AG04449 (cell line): ENCODE measurements at regions of chr4 and their contacts with region 1.

Region 1: DNA sequence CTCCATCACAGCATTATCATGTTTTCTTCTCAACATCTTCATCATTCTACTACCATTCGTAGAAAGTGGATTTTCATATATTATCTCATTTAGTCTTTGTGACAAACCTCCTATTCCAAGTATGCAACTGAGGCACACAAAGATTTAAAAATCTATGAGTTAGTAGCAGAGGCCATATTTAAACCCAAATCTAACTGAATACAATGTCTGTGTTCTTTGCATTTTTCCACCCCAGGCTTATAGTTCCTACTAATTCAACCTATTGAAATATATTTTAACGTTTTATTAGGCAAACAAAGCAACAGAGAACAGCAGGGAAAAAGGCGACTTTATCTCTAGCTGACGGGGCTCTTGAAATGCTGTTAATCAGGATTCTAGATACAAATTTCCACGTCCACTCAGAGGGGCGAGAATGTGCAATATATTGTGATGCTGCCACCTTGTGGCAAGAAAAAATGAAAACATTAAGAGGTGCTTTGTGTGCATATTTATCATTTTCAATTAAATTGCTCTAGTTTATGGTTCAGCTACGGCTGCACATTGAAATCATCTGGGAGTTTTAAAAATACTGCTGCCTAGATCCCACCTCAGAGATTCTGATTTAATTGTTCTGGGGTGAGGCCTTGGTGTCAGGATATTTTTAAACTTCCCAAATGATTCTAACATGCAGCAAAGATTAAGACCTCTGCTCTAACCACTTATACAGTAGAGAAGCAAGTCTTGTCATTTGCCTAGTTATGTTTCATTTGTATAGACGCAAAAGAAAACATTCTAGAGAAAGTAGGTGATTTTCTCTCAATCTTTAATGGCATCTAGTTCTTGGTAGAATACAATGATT is 315.9 kb downstream of the MAPK10 start:
- DNase-seq: no peak
- H3K4me3 ChIP-seq: no peak overlapping the region
- CTCF ChIP-seq: peak; percentile 33

Region 2: GRCh38 chr4:85147439-85148076 is 896.4 kb before region 1 on chr4:
- CTCF ChIA-PET with region 1: interaction called, 18 read pairs
- POLR2A ChIA-PET with region 1: no interaction called
- DNase-seq: peak; percentile 10
- H3K4me3 ChIP-seq: no peak overlapping the region
- CTCF ChIP-seq: peak; percentile 42

Region 3: DNA sequence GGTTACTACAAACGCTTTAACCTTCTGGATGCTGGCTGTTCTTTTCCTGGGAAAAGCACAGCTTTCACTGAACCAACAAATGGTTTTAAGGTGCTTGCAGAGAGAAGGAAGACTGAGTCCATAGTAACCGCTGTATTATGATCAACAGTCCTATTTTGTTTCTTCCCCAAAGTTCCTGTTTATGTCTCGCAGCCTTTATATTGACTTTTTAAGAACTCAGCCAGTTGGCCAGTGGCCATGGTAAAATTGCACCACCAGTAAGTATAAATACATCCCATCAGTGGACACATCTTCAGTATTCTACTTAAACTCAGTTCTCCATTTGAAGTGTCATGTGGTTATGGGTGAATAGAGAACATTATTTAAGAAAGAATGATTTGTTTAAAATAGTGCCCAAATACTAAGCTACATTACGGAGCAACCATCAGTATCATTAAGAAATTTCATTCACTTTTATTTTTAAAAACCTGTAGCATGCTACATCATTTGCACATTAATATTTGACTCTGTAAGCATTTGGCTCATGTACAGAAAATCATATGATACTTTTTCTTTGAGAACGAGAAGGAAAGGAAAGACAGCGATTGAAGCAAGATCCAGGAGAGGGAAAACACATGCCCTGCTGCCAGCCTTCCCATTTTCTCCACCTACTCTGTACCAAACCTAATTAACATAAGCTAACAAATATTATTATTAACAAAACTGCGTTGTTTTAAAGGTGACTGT is 282.0 kb before region 1 on chr4:
- CTCF ChIA-PET with region 1: interaction called, 23 read pairs
- POLR2A ChIA-PET with region 1: no interaction called
- DNase-seq: no peak
- H3K4me3 ChIP-seq: no peak overlapping the region
- CTCF ChIP-seq: no peak

Region 4: GRCh38 chr4:86033171-86033570 is 10.8 kb before region 1 on chr4:
- CTCF ChIA-PET with region 1: interaction called, 18 read pairs
- POLR2A ChIA-PET with region 1: no interaction called
- DNase-seq: no peak
- H3K4me3 ChIP-seq: no peak overlapping the region
- CTCF ChIP-seq: no peak